Left cardiac atrium (tissue), 4 donors: ENCODE measurements at regions of chr15 and their contacts with region 1.

Region 1: GRCh38 chr15:101269479-101270223 is 7.6 kb downstream of the SELENOS start:
- DNase-seq: peak; percentile 60
- ATAC-seq: peak; percentile 45 to 64

Region 2: DNA sequence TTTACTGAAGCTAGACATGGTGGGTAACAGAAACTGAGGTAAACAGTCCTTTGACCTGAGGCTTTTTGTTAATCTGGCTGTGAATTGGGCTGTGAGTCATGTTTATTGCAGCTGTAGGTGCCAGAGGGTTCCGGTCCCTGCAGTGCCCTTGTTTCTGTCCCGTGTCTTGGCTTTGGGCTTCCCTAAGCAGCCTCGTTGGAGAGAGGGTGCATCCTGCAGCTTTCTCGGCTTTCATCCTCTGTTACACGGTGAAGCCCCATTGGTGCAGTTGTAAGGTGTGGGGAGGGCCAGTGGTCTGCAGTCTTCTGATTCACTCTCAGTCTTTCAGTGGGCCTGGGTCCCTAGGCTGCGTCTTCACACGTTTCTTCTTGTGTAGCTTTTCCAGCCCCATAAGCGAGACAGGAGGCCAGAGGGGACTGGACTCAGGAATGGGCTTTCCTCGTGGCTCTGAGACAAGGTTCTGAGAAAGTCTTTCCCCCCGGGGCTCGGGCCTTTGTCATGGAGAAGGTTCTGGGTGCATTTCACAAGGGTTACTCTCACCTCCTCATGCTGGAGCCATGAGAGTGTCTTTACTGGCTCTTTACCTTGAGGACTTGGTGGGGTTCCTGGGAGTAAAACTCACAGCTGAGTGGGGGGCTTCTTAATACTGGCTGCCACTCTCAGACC is 634.1 kb before region 1 on chr15:
- intact Hi-C with region 1: loop called in 1 of 2 experiments (anchors 5 kb)
- DNase-seq: no peak
- ATAC-seq: no peak

Region 3: GRCh38 chr15:100918034-100918689 is 351.5 kb before region 1 on chr15:
- intact Hi-C with region 1: loop called in 1 of 2 experiments (anchors 10 kb)
- DNase-seq: peak; percentile 85
- ATAC-seq: peak; percentile 89 to 93

Region 4: GRCh38 chr15:100934726-100935125 is 334.9 kb before region 1 on chr15:
- intact Hi-C with region 1: loop called in 1 of 2 experiments (anchors 10 kb)
- DNase-seq: no peak
- ATAC-seq: no peak

Region 5: DNA sequence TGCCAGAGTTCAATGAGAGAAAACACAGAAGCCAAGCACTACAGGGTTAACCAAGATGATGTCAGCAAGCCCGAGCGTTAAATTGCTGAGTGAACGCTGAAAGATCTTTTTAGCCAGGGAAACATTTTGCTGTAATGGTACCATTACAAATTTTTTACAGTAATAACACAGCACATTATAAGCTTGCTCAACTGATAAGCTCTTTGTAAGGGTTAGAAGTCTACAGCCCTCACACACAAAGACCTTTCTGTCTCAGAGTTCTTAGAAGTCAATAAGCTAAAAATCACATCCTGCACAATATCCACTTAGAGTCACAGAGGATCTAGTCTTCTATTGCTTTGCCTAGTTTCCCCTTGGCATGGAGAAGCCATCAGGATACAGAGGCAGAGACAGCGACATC is 47.7 kb before region 1 on chr15:
- intact Hi-C with region 1: no loop called
- DNase-seq: no peak
- ATAC-seq: peak in 1 of 2 donors; percentile 30